ENCODE measurements at regions of chr5 and their contacts with region 1.

Region 1: DNA sequence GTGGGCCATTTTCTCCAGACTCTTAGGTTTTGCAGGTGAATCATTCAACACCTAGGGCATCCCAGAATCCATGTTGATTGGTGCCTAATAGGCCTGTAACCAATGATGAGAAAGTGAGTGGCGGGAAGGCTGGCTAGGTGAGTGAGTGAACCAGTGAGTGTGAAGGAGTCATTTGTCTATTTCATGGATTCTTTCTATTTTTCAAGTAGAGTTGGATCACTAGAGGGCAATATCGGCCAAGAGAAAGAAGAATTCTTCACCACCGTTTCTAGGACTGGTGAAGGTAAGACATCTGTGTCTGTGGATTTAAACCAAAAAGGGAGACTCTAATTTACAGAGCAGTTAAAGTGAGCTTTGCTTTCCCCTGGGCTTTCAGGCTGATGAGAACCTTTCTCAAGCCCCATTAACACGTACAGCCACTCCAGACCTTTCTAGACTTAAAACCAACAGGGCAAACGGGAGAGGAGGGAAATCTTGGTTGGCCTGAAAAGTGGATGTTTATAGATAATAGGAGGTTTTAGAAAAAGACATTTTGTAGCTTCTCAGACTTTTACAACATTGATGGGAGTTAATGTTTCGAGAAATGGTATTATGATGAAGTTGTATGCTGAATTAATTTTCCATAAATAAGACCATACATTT is 114.3 kb upstream of the IL12B start:
- DNase-seq: peak; percentile 50
- CTCF ChIP-seq: peak; percentile 42

Region 2: DNA sequence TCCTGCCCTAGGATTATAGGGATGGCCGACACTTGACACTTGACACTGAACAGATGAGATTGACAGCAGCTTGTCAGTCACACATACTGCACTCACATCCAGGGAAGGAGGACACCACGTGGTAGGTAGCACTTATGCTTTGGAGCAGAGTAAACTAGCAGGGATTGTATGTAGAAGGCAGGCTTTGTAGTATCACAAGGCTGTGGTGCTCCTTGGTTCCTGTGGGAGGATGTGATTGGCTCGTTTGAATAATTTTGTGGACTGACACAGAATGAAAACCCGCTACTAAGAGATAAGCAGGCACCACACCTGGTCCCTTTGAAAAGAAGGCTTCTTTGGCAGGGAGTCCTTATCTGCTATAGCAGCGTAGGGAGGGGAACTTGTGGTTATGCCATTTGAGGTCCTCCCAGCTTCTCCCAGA is 50.7 kb before region 1 on chr5:
- CTCF ChIA-PET with region 1: no interaction called
- POLR2A ChIA-PET with region 1: no interaction called
- DNase-seq: no peak
- CTCF ChIP-seq: no peak

Region 3: GRCh38 chr5:159456722-159457465 is 12.3 kb after region 1 on chr5:
- CTCF ChIA-PET with region 1: interaction called, 81 read pairs
- POLR2A ChIA-PET with region 1: no interaction called
- DNase-seq: peak; percentile 72
- CTCF ChIP-seq: no peak

Region 4: DNA sequence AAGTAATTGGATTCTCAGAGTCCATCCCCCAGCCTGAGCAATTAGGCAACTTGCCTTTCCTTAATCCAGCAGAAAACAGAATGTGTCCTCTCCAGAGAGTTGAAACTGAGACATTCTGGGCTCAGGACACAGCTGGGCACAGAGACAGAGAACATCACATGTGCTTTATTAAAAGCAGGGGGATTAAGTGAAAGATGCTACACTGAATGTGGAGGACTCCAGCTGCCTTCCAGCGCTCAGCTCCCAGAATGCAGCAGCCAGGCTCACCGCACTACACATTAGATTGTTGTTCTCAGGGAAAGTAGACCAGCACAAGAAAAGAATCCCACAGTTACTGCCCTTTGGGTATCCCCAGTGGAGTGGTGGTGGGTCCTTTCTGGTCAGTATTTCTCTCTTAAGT is 27.3 kb after region 1 on chr5:
- CTCF ChIA-PET with region 1: no interaction called
- POLR2A ChIA-PET with region 1: no interaction called
- DNase-seq: no peak
- CTCF ChIP-seq: no peak

Region 5: DNA sequence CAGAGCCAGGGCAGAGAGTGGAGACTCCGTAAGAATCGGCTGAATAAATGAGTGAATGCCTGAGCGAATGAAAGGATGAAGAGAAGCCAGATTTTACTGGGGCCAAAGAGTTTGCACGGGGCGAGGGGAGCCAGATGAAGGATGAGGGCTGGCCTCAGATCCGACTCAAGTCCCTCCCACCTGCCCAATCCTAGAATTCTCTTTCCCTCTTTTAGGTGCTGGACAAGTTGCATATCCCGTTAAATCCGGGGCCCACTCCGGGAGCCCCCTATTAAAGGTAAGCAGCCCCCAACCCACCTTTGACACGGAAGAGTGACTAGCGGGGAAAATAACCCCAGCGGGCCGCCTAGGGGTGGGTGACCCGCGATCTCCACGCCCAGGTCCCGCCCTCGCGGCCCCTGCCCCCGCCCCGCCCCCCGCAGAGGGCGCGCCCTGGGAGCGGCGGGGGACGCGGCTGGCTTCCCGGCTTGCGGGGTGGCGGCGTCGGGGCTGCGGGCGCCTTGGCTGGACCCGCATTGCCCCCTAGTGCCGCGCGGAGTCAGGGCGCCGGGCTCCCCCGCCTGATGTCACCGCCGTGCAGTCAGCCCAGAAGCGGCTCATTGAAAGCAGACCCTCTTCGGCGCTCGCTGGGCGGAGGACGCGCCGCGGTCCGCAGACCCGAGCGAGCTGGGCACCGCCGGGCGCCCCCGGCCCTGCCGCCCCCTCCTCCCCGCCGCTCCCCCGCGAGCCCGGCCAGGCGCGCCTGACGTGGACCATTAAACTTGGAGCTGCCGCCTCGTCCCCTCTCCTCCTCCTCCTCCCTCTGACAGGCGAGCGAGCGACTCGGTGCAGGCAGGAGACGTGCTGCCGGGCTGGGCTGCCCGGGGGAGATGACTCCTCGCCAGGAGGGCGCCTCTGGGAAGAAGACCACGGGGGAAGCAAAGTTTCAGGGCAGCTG is 471.6 kb after region 1 on chr5 and contains the start of gene ADRA1B:
- CTCF ChIA-PET with region 1: interaction called, 15 read pairs
- POLR2A ChIA-PET with region 1: no interaction called
- DNase-seq: peak; percentile 77
- CTCF ChIP-seq: peak; percentile 52

Region 6: GRCh38 chr5:159965031-159965837 is 520.7 kb after region 1 on chr5:
- CTCF ChIA-PET with region 1: interaction called, 11 read pairs
- POLR2A ChIA-PET with region 1: no interaction called
- DNase-seq: peak; percentile 46
- CTCF ChIP-seq: peak; percentile 63

Region 7: DNA sequence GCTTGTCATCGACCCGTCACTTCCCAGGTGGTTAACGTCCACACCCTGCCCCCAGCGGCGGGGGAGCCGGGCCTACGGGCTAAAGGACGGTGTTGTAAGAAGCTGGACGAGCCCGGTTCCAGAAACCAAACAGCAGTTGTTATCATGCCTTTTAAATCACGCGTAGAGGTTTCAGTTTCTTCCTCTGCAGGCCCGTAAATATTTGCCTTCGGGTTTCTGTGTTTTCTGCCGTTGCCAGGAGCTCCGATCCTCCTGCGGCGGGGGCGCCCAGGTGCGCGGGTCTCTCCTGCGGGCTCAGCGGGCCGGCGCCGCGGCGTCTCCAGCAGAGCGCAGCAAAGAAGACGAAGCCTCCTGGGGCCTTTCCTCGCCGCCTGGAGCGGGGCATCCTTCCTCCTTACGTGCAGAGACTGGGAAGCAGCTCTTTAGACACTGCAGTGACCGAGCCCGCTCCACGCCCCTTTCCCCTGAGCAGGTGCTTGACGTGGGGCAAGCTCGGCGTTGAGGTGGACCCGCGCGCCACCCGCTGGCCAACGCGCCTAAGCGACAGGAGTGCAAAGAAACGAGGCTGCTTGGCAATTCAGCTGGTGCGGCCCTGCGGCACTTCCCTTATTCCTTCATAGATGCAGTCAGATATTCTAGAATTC is 542.6 kb after region 1 on chr5:
- CTCF ChIA-PET with region 1: interaction called, 33 read pairs
- POLR2A ChIA-PET with region 1: no interaction called
- DNase-seq: peak; percentile 88
- CTCF ChIP-seq: peak; percentile 85

Measured in GM10248 (cell line).